ENCODE measurements at regions of chr2 and their contacts with region 1.

Region 1: GRCh38 chr2:177229448-177230242 is 17.1 kb downstream of the HNRNPA3 start:
- DNase-seq: no peak
- ATAC-seq: peak; percentile 40
- H3K4me3 Mint-ChIP-seq: no peak overlapping the region
- H3K27ac Mint-ChIP-seq: peak overlapping the region; percentile 36
- H3K4me1 Mint-ChIP-seq: peaks cover 39% of the 10 kb centered on the region
- H3K27me3 Mint-ChIP-seq: no peaks in the 10 kb centered on the region
- CTCF ChIP-seq: no peak

Region 2: GRCh38 chr2:177239932-177240630 is 10.4 kb after region 1 on chr2:
- CTCF ChIA-PET with region 1: interaction called, 6 read pairs
- POLR2A ChIA-PET with region 1: interaction called, 24 read pairs
- intact Hi-C with region 1: no loop called
- DNase-seq: peak; percentile 54
- ATAC-seq: peak; percentile 87
- H3K4me3 Mint-ChIP-seq: no peak overlapping the region
- H3K27ac Mint-ChIP-seq: peak overlapping the region; percentile 87
- H3K4me1 Mint-ChIP-seq: peaks cover 70% of the 10 kb centered on the region
- H3K27me3 Mint-ChIP-seq: no peaks in the 10 kb centered on the region
- CTCF ChIP-seq: no peak

Measured in activated CD8-positive, alpha-beta T cell treated with anti-CD3 and anti-CD28 coated beads for 36 hours (primary cell).